ENCODE measurements at regions of chr6 and their contacts with region 1.

Region 1: GRCh38 chr6:153231048-153231646 is 100.1 kb upstream of the RGS17 start:
- DNase-seq: peak; percentile 2
- H3K4me3 ChIP-seq: no peak overlapping the region
- H3K27ac ChIP-seq: no peak overlapping the region
- H3K27me3 ChIP-seq: no peaks in the 10 kb centered on the region
- CTCF ChIP-seq: peak; percentile 93

Region 2: GRCh38 chr6:152948150-152948768 is 282.9 kb before region 1 on chr6:
- CTCF ChIA-PET with region 1: no interaction called
- POLR2A ChIA-PET with region 1: no interaction called
- DNase-seq: peak; percentile 3
- H3K4me3 ChIP-seq: no peak overlapping the region; the same call in 1 of the 2 replicates
- H3K27ac ChIP-seq: no peak overlapping the region
- H3K27me3 ChIP-seq: no peaks in the 10 kb centered on the region
- CTCF ChIP-seq: peak; percentile 72

Region 3: DNA sequence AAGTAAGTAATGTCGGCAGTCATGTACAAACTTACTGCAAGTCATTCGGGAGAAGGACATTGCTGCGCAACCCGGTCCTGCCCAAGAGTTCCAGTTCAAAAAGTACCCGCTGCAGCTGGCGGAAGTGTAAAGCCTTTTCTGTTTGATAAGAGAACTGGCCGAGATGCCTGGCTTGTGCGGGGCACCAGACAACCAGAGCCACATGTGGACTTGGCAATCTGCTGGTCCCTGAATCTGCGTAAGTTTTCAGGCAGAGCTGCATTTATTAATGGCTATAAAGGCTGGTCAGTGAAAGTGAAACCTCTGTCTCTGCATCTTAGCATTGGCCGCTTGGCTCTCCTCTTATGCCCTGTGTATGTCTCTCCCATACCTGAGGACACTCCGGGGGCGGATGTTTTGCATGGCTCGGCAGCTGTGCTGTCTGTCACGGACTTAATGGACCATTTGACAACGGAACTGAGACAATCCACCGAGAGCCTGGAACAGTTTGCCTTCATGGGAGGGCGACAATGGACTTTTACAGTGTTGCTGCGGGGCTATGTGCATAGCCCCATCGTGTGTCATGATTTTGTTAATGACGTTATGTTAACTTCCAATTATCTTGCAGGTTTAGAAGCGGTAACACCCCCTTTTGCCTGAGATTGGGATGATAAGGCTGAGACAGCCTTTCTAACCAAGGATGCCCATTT is 80.3 kb before region 1 on chr6:
- CTCF ChIA-PET with region 1: interaction called, 11 read pairs
- POLR2A ChIA-PET with region 1: no interaction called
- DNase-seq: no peak
- H3K4me3 ChIP-seq: no peak overlapping the region
- H3K27ac ChIP-seq: no peak overlapping the region
- H3K27me3 ChIP-seq: no peaks in the 10 kb centered on the region
- CTCF ChIP-seq: no peak

Region 4: DNA sequence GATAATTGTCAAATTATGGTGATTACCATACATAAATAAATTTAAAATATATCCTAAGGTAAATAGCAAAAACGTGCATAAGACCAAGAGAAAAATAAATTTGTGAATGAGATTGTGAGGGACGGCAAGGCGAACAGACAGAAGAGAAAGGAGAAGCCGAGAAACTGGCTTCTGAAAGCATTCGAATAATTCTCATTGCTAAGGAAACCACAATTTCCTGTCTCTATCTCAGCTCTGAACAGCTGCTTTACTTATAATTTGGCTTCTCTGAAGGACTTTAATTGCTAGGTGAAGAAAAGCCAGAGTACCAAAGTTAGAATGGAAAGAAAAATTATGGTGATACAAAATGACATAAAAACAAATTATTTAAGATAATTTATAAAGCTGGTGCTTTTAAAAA is 21.1 kb before region 1 on chr6:
- CTCF ChIA-PET with region 1: interaction called, 14 read pairs
- POLR2A ChIA-PET with region 1: no interaction called
- DNase-seq: peak; percentile 1
- H3K4me3 ChIP-seq: no peak overlapping the region
- H3K27ac ChIP-seq: no peak overlapping the region
- H3K27me3 ChIP-seq: no peaks in the 10 kb centered on the region
- CTCF ChIP-seq: no peak

Region 5: GRCh38 chr6:153215242-153215641 is 15.9 kb before region 1 on chr6:
- CTCF ChIA-PET with region 1: interaction called, 14 read pairs
- POLR2A ChIA-PET with region 1: no interaction called
- DNase-seq: no peak
- H3K4me3 ChIP-seq: no peak overlapping the region
- H3K27ac ChIP-seq: no peak overlapping the region
- H3K27me3 ChIP-seq: no peaks in the 10 kb centered on the region
- CTCF ChIP-seq: no peak; the same call in 1 of the 2 replicates

Region 6: GRCh38 chr6:153242767-153243166 is 11.6 kb after region 1 on chr6:
- CTCF ChIA-PET with region 1: interaction called, 11 read pairs
- POLR2A ChIA-PET with region 1: no interaction called
- DNase-seq: no peak
- H3K4me3 ChIP-seq: no peak overlapping the region
- H3K27ac ChIP-seq: no peak overlapping the region
- H3K27me3 ChIP-seq: no peaks in the 10 kb centered on the region
- CTCF ChIP-seq: no peak